Caco-2 (cell line): ENCODE measurements at regions of chr1 and their contacts with region 1.

Region 1: GRCh38 chr1:230728710-230729392 is 14.9 kb upstream of the AGT start:
- DNase-seq: peak; percentile 78 to 83
- H3K4me3 ChIP-seq: no peak overlapping the region
- H3K4me3 Mint-ChIP-seq: no peak overlapping the region
- H3K27ac Mint-ChIP-seq: peak overlapping the region; percentile 51
- H3K4me1 ChIP-seq: peaks cover 13% of the 10 kb centered on the region
- H3K4me1 Mint-ChIP-seq: peaks cover 8% of the 10 kb centered on the region
- H3K27me3 ChIP-seq: no peaks in the 10 kb centered on the region
- H3K27me3 Mint-ChIP-seq: no peaks in the 10 kb centered on the region
- CTCF ChIP-seq: no peak

Region 2: DNA sequence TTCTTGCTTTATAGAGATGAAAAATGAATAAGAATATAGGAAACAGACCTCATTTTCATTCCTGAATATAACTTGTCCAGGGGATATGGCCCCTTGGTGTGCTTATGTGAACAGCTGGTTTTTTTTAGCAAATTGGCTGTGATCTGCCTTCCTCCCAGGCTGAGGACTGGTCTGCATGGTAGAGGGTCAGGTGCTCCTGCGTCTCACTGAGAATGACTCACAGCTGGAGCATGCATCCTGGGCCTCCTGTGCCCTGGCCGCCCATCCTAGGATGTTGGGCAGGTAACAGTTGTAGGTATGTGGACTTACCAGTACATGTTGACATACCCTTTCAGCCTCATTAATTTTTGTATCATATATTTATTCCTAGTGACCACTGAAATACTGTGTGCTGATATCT is 44.7 kb before region 1 on chr1:
- CTCF ChIA-PET with region 1: no interaction called
- POLR2A ChIA-PET with region 1: no interaction called
- intact Hi-C with region 1: no loop called
- DNase-seq: peak in 1 of 2 experiments; percentile 28
- H3K4me3 ChIP-seq: no peak overlapping the region
- H3K4me3 Mint-ChIP-seq: no peak overlapping the region
- H3K27ac Mint-ChIP-seq: no peak overlapping the region
- H3K4me1 ChIP-seq: no peaks in the 10 kb centered on the region
- H3K4me1 Mint-ChIP-seq: peaks cover 12% of the 10 kb centered on the region
- H3K27me3 ChIP-seq: no peaks in the 10 kb centered on the region
- H3K27me3 Mint-ChIP-seq: no peaks in the 10 kb centered on the region
- CTCF ChIP-seq: no peak

Region 3: DNA sequence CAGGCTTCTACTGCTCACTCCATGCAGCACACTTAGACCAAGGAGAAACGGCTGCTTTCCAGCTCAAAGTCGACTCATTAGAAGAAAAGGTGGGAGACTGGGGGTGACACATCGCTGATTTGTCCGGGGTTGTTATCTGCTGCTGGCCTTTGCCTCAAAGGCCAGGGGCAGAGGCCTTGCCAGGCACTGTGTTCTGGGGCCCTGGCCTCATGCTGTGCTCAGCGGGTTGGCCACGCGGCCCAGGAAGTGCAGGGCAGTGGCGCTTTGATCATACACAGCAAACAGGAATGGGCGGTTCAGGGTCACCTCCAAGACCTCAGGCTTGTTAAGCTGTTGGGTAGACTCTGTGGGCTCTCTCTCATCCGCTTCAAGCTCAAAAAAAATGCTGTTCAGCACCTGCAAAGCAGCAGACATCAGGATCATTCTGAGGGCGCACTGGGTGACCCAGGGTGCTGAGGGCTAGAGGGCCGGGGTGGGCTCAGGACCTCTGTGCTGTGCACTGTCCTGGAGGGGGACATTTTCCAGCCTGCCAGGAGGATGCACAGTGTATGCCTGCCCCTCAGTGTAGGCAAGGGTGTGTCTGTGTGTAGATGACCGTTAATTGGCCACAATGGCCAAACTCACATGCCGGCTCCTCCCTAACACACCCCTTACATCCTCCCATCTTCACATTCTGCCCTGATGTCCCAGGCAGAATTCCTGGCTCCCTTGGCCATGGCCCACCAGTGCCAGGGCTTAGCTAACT is 25.7 kb before region 1 on chr1:
- CTCF ChIA-PET with region 1: no interaction called
- POLR2A ChIA-PET with region 1: no interaction called
- intact Hi-C with region 1: loop called (anchors 2 kb)
- DNase-seq: peak; percentile 86 to 92
- H3K4me3 ChIP-seq: no peak overlapping the region
- H3K4me3 Mint-ChIP-seq: peak overlapping the region; percentile 80
- H3K27ac Mint-ChIP-seq: peak overlapping the region; percentile 96
- H3K4me1 ChIP-seq: peaks cover 49% of the 10 kb centered on the region
- H3K4me1 Mint-ChIP-seq: peaks cover 58% of the 10 kb centered on the region
- H3K27me3 ChIP-seq: no peaks in the 10 kb centered on the region
- H3K27me3 Mint-ChIP-seq: no peaks in the 10 kb centered on the region
- CTCF ChIP-seq: no peak

Region 4: GRCh38 chr1:230744382-230744781 is 15.5 kb after region 1 on chr1:
- CTCF ChIA-PET with region 1: no interaction called
- POLR2A ChIA-PET with region 1: no interaction called
- intact Hi-C with region 1: no loop called
- DNase-seq: peak; percentile 48 to 57
- H3K4me3 ChIP-seq: no peak overlapping the region
- H3K4me3 Mint-ChIP-seq: peak overlapping the region; percentile 32
- H3K27ac Mint-ChIP-seq: peak overlapping the region; percentile 80
- H3K4me1 ChIP-seq: peaks cover 42% of the 10 kb centered on the region
- H3K4me1 Mint-ChIP-seq: peaks cover 35% of the 10 kb centered on the region
- H3K27me3 ChIP-seq: no peaks in the 10 kb centered on the region
- H3K27me3 Mint-ChIP-seq: no peaks in the 10 kb centered on the region
- CTCF ChIP-seq: no peak

Region 5: DNA sequence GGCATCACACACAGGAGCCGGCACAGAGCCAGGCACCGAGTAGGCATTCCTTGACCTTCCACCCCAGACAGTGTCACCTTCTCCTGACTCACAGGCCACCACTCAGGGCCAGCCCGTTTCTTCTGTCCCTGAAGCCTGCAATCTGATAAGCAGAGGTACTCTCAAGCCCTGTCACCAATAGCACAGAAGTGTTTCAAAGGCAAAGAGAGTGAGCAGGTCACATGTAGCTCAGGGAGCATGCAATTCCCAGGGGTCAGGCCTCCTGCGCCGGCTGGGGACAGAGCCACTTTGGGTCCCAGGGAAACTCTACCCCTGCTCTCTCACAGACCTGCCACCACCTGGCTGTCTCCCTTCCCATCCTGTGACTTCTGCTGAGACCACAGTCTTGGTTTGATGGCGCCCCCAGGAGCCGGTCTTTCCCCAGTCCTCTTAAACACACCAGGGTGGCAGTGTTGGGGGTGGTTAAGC is 31.5 kb after region 1 on chr1:
- CTCF ChIA-PET with region 1: interaction called, 4 read pairs
- POLR2A ChIA-PET with region 1: no interaction called
- intact Hi-C with region 1: loop called (anchors 2 kb)
- DNase-seq: peak; percentile 75 to 80
- H3K4me3 ChIP-seq: no peak overlapping the region
- H3K4me3 Mint-ChIP-seq: no peak overlapping the region
- H3K27ac Mint-ChIP-seq: peak overlapping the region; percentile 22
- H3K4me1 ChIP-seq: peaks cover 14% of the 10 kb centered on the region
- H3K4me1 Mint-ChIP-seq: peaks cover 29% of the 10 kb centered on the region
- H3K27me3 ChIP-seq: no peaks in the 10 kb centered on the region
- H3K27me3 Mint-ChIP-seq: no peaks in the 10 kb centered on the region
- CTCF ChIP-seq: peak in 1 of 2 experiments; percentile 47